ENCODE measurements at regions of chr12 and their contacts with region 1.

Region 1: GRCh38 chr12:125183187-125184067 is 118.2 kb downstream of the AACS start:
- DNase-seq: peak; percentile 67 to 85
- H3K4me3 ChIP-seq: no peak overlapping the region
- H3K4me3 Mint-ChIP-seq: no peak overlapping the region
- H3K27ac Mint-ChIP-seq: no peak overlapping the region
- H3K4me1 ChIP-seq: no peaks in the 10 kb centered on the region
- H3K4me1 Mint-ChIP-seq: no peaks in the 10 kb centered on the region
- H3K27me3 ChIP-seq: peaks cover 4% of the 10 kb centered on the region
- H3K27me3 Mint-ChIP-seq: peaks cover 30% of the 10 kb centered on the region
- CTCF ChIP-seq: peak; percentile 97 to 98

Region 2: GRCh38 chr12:125203145-125203765 is 19.8 kb after region 1 on chr12:
- CTCF ChIA-PET with region 1: interaction called, 14 read pairs
- POLR2A ChIA-PET with region 1: no interaction called
- intact Hi-C with region 1: loop called (anchors 1 kb)
- DNase-seq: no peak
- H3K4me3 ChIP-seq: no peak overlapping the region
- H3K4me3 Mint-ChIP-seq: no peak overlapping the region
- H3K27ac Mint-ChIP-seq: no peak overlapping the region
- H3K4me1 ChIP-seq: no peaks in the 10 kb centered on the region
- H3K4me1 Mint-ChIP-seq: no peaks in the 10 kb centered on the region
- H3K27me3 ChIP-seq: no peaks in the 10 kb centered on the region
- H3K27me3 Mint-ChIP-seq: peaks cover 21% of the 10 kb centered on the region
- CTCF ChIP-seq: peak; percentile 59 to 60

Region 3: GRCh38 chr12:125314051-125314755 is 130.8 kb after region 1 on chr12:
- CTCF ChIA-PET with region 1: no interaction called
- POLR2A ChIA-PET with region 1: no interaction called
- intact Hi-C with region 1: no loop called
- DNase-seq: no peak
- H3K4me3 ChIP-seq: no peak overlapping the region
- H3K4me3 Mint-ChIP-seq: no peak overlapping the region
- H3K27ac Mint-ChIP-seq: no peak overlapping the region
- H3K4me1 ChIP-seq: no peaks in the 10 kb centered on the region
- H3K4me1 Mint-ChIP-seq: no peaks in the 10 kb centered on the region
- H3K27me3 ChIP-seq: no peaks in the 10 kb centered on the region
- H3K27me3 Mint-ChIP-seq: peaks cover 22% of the 10 kb centered on the region
- CTCF ChIP-seq: no peak

Region 4: DNA sequence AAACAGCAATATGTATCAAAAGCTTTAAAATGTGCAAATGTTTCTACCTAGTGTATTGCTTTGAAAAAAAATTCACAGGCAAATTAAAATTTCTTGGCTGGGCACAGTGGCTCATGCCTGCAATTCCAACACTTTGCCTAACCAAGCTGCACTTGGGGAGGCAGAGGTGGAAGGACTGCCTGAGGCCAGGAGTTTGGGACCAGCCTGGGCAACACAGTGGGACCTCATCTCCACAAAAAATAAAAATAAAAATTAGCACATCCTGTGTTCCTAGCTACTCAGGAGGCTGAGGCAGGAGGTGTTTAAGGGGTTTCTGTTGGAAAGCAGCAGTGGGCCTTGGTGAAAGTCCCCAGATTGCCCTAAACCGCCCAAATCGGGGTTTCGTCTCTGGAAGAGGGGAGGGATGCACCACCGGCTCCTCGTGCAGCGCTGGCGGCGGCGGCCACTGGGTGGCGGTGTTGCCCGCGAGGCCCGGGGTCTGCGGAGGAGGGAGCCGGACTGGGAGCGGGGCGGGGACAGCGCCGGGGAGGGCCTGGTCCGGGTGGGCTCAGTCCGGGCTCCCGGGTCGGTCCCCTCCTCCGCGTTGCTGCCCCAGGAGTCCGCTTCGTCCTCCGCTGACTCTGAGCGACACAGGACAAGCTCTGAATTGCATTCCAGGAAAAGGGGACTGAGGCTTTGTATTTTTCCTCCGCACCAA is 147.4 kb after region 1 on chr12:
- CTCF ChIA-PET with region 1: no interaction called
- POLR2A ChIA-PET with region 1: no interaction called
- intact Hi-C with region 1: loop called (anchors 5 kb)
- DNase-seq: peak; percentile 62 to 84
- H3K4me3 ChIP-seq: peak overlapping the region; percentile 26
- H3K4me3 Mint-ChIP-seq: peak overlapping the region; percentile 37
- H3K27ac Mint-ChIP-seq: no peak overlapping the region
- H3K4me1 ChIP-seq: no peaks in the 10 kb centered on the region
- H3K4me1 Mint-ChIP-seq: no peaks in the 10 kb centered on the region
- H3K27me3 ChIP-seq: peaks cover 1% of the 10 kb centered on the region; the same call in 1 of the 2 replicates
- H3K27me3 Mint-ChIP-seq: peaks cover 15% of the 10 kb centered on the region
- CTCF ChIP-seq: peak; percentile 83 to 90

Region 5: DNA sequence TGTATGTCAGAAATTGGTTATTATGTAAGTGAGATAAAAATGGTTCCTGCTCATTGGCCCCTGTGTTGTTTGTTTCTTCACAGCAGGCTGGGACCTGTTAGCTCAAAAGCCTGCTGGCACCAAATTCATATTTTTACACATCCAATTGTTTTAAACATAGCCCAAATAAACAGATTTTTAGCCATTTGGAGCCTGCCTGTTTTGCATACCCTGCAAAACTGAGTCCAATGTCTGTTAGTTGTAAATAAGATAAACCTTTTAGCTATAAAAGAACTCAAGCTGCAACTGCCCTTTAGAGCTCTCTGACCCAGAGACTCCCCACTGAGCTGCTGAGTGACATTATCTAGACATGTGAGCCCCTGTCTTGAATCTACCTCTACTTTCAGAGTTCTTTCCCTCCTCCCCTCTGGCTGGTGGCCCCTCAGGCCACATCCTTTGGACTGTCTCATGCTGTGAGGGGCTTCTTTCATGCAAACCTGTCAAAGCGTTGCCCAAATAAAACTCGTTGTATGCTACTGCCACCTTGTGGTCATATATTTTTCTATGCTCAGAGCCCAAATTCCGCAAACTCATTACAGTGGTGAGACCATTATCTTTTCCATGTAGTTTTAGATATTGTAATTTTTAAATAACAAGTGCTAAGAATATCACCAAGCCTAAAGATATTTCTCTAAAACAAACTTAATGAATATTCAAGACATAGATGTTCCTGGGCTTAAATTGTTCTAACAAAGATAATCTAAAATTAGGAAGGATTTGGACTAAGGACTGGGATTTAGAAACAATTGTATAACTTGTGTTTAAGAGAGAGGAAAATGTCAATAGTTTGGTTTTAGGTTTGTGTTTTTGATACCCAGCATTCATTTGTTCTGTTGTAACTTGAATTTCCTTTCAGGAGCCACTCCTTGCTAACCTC is 219.7 kb after region 1 on chr12:
- CTCF ChIA-PET with region 1: interaction called, 10 read pairs
- POLR2A ChIA-PET with region 1: no interaction called
- intact Hi-C with region 1: loop called (anchors 1 kb)
- DNase-seq: peak in 1 of 2 experiments; percentile 39
- H3K4me3 ChIP-seq: no peak overlapping the region
- H3K4me3 Mint-ChIP-seq: no peak overlapping the region
- H3K27ac Mint-ChIP-seq: no peak overlapping the region
- H3K4me1 ChIP-seq: peaks cover 5% of the 10 kb centered on the region; the same call in 1 of the 2 replicates
- H3K4me1 Mint-ChIP-seq: no peaks in the 10 kb centered on the region
- H3K27me3 ChIP-seq: no peaks in the 10 kb centered on the region; the same call in 1 of the 2 replicates
- H3K27me3 Mint-ChIP-seq: peaks cover 8% of the 10 kb centered on the region
- CTCF ChIP-seq: peak; percentile 59 to 71